ENCODE measurements at regions of chr17 and their contacts with region 1.

Region 1: DNA sequence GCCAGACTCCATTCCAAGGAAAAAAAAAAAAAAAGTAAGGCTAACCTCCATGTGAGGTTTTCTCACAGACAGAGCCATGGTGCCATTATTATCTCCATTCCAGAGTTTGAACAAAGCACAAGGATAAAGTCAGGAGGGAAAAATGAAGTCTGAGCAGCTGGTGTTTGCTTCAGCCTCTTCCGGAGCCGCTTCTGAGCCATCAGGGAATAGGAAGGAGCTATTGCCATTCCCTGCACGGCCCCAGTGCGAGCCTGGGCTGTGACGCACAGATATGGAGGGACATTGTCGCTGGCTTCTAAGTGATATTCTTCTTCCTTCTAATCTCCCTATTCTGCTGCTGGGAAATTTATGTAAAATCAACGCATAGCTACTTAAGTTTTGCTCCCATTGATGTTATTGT is 69.5 kb upstream of the PIRT start:
- DNase-seq: no peak
- ATAC-seq: no peak
- H3K4me3 ChIP-seq: no peak overlapping the region
- H3K27ac ChIP-seq: no peak overlapping the region
- H3K4me1 ChIP-seq: no peaks in the 10 kb centered on the region
- CTCF ChIP-seq: no peak
- EP300 ChIP-seq: no peak
- POLR2A ChIP-seq: no peak
- RAD21 ChIP-seq: no peak

Region 2: GRCh38 chr17:10939366-10939765 is 32.0 kb after region 1 on chr17:
- CTCF ChIA-PET with region 1: no interaction called
- POLR2A ChIA-PET with region 1: interaction called, 10 read pairs
- DNase-seq: no peak
- ATAC-seq: no peak
- H3K4me3 ChIP-seq: no peak overlapping the region
- H3K27ac ChIP-seq: no peak overlapping the region
- H3K4me1 ChIP-seq: no peaks in the 10 kb centered on the region
- CTCF ChIP-seq: no peak
- EP300 ChIP-seq: no peak
- POLR2A ChIP-seq: no peak
- RAD21 ChIP-seq: no peak

Measured in A549 (cell line).